Tibial artery (tissue), 4 donors: ENCODE measurements at regions of chr6 and their contacts with region 1.

Region 1: GRCh38 chr6:77457720-77458349 is 5.5 kb downstream of the HTR1B start:
- DNase-seq: peak; percentile 84 to 86
- H3K4me3 ChIP-seq: peak overlapping the region; percentile 10 to 13
- H3K27ac ChIP-seq: peak overlapping the region; percentile 75 to 93
- H3K4me1 ChIP-seq: peaks cover 0 to 52% (median 5%) of the 10 kb centered on the region in 4 donors
- H3K27me3 ChIP-seq: no peaks in the 10 kb centered on the region
- CTCF ChIP-seq: peak; percentile 77 to 83

Region 2: GRCh38 chr6:75934643-75935472 is 1523.0 kb before region 1 on chr6:
- intact Hi-C with region 1: loop called (anchors 5 kb)
- DNase-seq: peak in 1 of 2 donors; percentile 21
- H3K4me3 ChIP-seq: peak overlapping the region; percentile 39 to 57
- H3K27ac ChIP-seq: peak overlapping the region in 1 of 2 donors; percentile 23
- H3K4me1 ChIP-seq: peaks cover 0 to 22% (median 14%) of the 10 kb centered on the region in 4 donors
- H3K27me3 ChIP-seq: no peaks in the 10 kb centered on the region
- CTCF ChIP-seq: peak; percentile 66 to 69

Region 3: DNA sequence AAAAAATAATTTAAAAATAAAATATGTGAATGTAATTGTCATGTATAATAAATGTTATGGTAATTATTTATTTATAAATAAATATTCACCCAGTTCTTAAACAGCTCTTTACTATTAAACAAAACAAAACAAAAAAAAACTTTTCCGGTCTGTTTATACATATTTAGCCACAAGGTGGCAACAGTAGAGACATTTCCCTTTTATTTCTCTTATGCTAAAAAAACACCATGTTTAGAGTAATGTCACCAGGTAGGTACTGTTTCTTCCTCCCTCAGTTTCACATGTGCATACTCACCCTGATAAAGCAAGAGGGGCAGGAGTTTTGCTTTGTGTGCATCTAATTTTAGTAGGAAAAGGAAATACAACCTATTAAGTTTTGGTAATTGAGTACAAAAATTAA is 775.0 kb before region 1 on chr6:
- intact Hi-C with region 1: loop called (anchors 5 kb)
- DNase-seq: no peak
- H3K4me3 ChIP-seq: no peak overlapping the region
- H3K27ac ChIP-seq: no peak overlapping the region
- H3K4me1 ChIP-seq: peaks cover 0 to 6% (median under 1%) of the 10 kb centered on the region in 4 donors
- H3K27me3 ChIP-seq: no peaks in the 10 kb centered on the region
- CTCF ChIP-seq: peak; percentile 34 to 37

Region 4: DNA sequence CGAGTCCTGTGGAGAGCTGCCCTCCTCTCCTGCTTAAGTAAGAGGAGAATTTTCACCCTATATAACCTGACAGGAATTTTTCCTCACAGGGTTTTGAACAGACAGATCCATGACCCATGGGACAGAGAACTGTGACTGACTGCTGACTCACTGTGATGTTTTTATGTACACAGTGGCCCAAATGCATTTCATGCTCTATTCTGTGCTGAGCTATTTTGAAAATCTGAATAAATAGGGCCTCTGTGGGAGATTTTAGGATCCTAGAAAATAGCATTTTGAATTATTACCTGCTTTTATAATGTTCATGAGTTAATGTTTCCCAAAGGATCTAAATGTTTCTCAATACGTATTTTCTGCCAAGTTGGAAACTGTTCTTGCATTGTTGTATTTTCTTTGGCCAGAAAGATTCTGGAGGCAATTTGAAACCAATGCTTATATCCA is 572.0 kb before region 1 on chr6:
- intact Hi-C with region 1: loop called (anchors 10 kb)
- DNase-seq: no peak
- H3K4me3 ChIP-seq: no peak overlapping the region
- H3K27ac ChIP-seq: peak overlapping the region; percentile 73 to 75
- H3K4me1 ChIP-seq: peaks cover 0 to 44% (median 9%) of the 10 kb centered on the region in 4 donors
- H3K27me3 ChIP-seq: no peaks in the 10 kb centered on the region
- CTCF ChIP-seq: no peak